Testis (tissue), 5 donors: ENCODE measurements at regions of chr1 and their contacts with region 1.

Region 1: GRCh38 chr1:209585672-209586071 is 2.2 kb downstream of the CAMK1G start:
- DNase-seq: peak; percentile 74
- H3K4me3 ChIP-seq: peak overlapping the region in 1 of 2 donors; percentile 8
- H3K27ac ChIP-seq: no peak overlapping the region
- H3K4me1 ChIP-seq: peaks cover 17% of the 10 kb centered on the region
- H3K27me3 ChIP-seq: no peaks in the 10 kb centered on the region
- CTCF ChIP-seq: no peak
- POLR2A ChIP-seq: no peak

Region 2: DNA sequence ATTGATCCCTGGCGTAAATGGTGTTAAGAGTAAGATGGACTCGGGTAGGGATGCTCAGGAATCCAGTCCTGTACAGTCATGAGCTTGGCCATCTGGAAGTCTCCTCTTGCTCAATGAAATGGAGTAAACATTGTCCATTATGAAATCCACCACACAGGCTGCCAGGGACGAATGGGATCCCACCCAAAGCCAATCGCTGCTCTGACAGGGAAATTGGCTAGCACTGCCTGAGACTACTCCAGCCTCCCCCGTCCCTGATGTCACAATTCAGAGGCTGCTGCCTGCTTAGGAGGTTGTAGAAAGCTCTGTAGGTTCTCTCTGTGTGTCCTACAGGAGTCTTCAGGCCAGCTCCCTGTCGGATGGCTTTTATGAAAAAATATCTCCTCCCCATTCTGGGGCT is 118.9 kb after region 1 on chr1 and contains the start of gene HSD11B1:
- intact Hi-C with region 1: no loop called
- DNase-seq: peak; percentile 66
- H3K4me3 ChIP-seq: no peak within 1 kb of the TSS
- H3K27ac ChIP-seq: no peak within 1 kb of the TSS
- H3K4me1 ChIP-seq: peaks cover 9% of the 10 kb centered on the region
- H3K27me3 ChIP-seq: no peaks in the 10 kb centered on the region
- CTCF ChIP-seq: no peak
- POLR2A ChIP-seq: no peak
- total RNA-seq, gene HSD11B1: 17.6 to 18.0 TPM

Region 3: GRCh38 chr1:209747580-209748262 is 162.0 kb after region 1 on chr1:
- intact Hi-C with region 1: loop called (anchors 10 kb)
- DNase-seq: peak; percentile 93
- H3K4me3 ChIP-seq: peak overlapping the region; percentile 31 to 37
- H3K27ac ChIP-seq: peak overlapping the region in 1 of 2 donors; percentile 68
- H3K4me1 ChIP-seq: peaks cover 22% of the 10 kb centered on the region
- H3K27me3 ChIP-seq: no peaks in the 10 kb centered on the region
- CTCF ChIP-seq: peak; percentile 96 to 99 (median 98)
- POLR2A ChIP-seq: no peak